ENCODE measurements at regions of chr6 and their contacts with region 1.

Region 1: GRCh38 chr6:56902641-56903464 is 52.1 kb upstream of the BEND6 start:
- DNase-seq: peak; percentile 59 to 72
- H3K4me3 ChIP-seq: no peak overlapping the region
- H3K27ac ChIP-seq: peak overlapping the region; percentile 46 to 67
- H3K4me1 ChIP-seq: no peaks in the 10 kb centered on the region
- H3K27me3 ChIP-seq: no peaks in the 10 kb centered on the region
- CTCF ChIP-seq: peak; percentile 34 to 85 (median 68)
- POLR2A ChIP-seq: no peak

Region 2: DNA sequence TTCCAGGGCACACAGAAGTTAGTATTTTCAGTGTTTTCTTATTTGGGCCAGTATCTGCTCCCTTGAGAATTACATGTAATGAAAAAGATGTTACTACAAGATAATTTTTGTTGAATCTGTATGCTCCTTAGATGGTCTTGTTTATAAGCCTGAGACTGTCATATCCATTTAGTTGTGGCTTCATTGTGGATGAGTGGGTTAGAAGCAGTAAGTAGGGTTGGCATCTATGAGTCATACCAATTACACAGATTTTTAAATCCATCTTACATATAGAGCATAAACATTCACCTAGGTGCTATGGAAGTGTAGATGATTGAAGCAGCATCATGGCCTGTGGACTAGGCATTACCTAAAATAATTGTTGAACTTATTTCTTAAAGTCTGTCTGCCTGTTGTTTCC is 255.8 kb after region 1 on chr6:
- intact Hi-C with region 1: loop called (anchors 5 kb)
- DNase-seq: no peak
- H3K4me3 ChIP-seq: no peak overlapping the region
- H3K27ac ChIP-seq: no peak overlapping the region
- H3K4me1 ChIP-seq: no peaks in the 10 kb centered on the region
- H3K27me3 ChIP-seq: no peaks in the 10 kb centered on the region
- CTCF ChIP-seq: no peak
- POLR2A ChIP-seq: no peak

Region 3: DNA sequence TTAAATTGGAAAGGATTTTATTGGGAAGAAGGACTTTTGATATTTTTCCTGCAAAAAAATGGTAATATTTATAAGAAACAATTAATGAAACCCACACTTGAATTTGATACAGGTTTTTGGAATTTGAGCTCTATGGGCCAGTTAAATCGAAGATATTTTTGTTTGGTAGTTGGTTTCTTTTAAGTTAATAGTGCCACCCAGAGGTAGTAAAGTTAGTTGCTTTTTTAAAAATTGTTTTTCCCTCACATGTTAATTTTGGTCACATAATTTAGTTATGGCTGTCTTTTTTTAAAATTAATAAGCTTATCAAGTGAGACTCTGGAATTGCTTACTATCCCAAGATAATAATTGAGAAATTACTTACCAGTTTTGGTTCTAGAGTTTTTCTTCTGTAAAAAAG is 421.7 kb after region 1 on chr6:
- intact Hi-C with region 1: loop called (anchors 5 kb)
- DNase-seq: no peak
- H3K4me3 ChIP-seq: no peak overlapping the region
- H3K27ac ChIP-seq: no peak overlapping the region
- H3K4me1 ChIP-seq: no peaks in the 10 kb centered on the region
- H3K27me3 ChIP-seq: no peaks in the 10 kb centered on the region
- CTCF ChIP-seq: peak; percentile 39 to 61 (median 48)
- POLR2A ChIP-seq: no peak